ENCODE measurements at regions of chr2 and their contacts with region 1.

Region 1: DNA sequence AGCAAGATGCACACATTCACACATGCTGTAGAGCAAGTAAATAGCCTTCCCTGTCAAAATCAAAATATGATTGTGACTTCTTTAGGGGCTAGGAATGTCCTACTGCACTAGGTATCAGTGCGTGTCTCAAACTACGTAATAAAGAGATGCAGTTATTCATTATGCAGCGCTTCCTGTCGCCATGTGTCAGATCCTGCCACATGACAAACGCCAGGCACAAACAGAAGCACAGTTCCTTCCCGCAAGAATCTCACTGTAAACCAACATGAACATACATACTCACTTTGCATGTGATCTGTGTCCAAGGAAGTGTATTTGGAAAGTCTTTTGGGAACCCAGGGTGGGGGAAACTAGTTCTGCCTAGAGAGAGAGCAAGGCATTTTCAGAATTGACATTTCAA is 599.9 kb downstream of the RNF144A start:
- DNase-seq: peak in 7 of 9 donors; percentile 28 to 63 (median 49)
- ATAC-seq: peak; percentile 89
- H3K4me3 ChIP-seq: peak overlapping the region; percentile 12
- H3K4me3 Mint-ChIP-seq: peak overlapping the region; percentile 20 to 82 (median 77)
- H3K27ac ChIP-seq: peak overlapping the region; percentile 35
- H3K27ac Mint-ChIP-seq: peak overlapping the region; percentile 71 to 97 (median 88)
- H3K4me1 ChIP-seq: peaks cover 0 to 16% of the 10 kb centered on the region in 2 donors
- H3K4me1 Mint-ChIP-seq: peaks cover 13 to 68% (median 51%) of the 10 kb centered on the region in 7 donors
- H3K27me3 ChIP-seq: no peaks in the 10 kb centered on the region
- H3K27me3 Mint-ChIP-seq: no peaks in the 10 kb centered on the region

Region 2: DNA sequence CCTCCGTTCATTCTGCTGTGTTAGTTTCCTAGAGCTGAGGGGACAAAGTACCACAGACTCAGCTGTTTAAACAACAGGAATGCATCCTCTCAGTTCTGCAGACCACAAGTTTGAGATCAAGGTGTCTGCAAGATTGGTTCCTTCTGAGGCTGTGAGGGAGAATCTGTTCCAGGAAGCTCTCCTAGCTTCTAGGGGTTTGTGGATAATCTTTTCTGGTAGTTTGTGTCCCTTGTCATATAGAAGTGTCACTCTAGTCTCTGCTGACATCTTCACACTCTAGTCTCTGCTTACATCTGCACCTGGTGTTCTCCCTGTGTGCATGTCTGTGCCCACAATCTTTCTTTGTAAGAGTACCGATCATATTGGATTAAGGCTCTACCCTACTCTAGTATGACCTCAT is 18.1 kb before region 1 on chr2:
- CTCF ChIA-PET with region 1: no interaction called
- POLR2A ChIA-PET with region 1: no interaction called
- intact Hi-C with region 1: loop called in 1 of 2 experiments (anchors 2 kb)
- DNase-seq: peak in 1 of 9 donors; percentile 14
- ATAC-seq: no peak
- H3K4me3 ChIP-seq: no peak overlapping the region
- H3K4me3 Mint-ChIP-seq: peak overlapping the region in 4 of 10 donors; percentile 5 to 37 (median 18)
- H3K27ac ChIP-seq: no peak overlapping the region
- H3K27ac Mint-ChIP-seq: peak overlapping the region in 3 of 9 donors; percentile 24 to 58 (median 51)
- H3K4me1 ChIP-seq: no peaks in the 10 kb centered on the region
- H3K4me1 Mint-ChIP-seq: peaks cover 10 to 52% (median 35%) of the 10 kb centered on the region in 7 donors
- H3K27me3 ChIP-seq: no peaks in the 10 kb centered on the region
- H3K27me3 Mint-ChIP-seq: no peaks in the 10 kb centered on the region

Region 3: GRCh38 chr2:7539760-7540159 is 22.7 kb after region 1 on chr2:
- CTCF ChIA-PET with region 1: no interaction called
- POLR2A ChIA-PET with region 1: interaction called, 5 read pairs
- intact Hi-C with region 1: loop called in 1 of 2 experiments (anchors 2 kb)
- DNase-seq: no peak
- ATAC-seq: no peak
- H3K4me3 ChIP-seq: no peak overlapping the region
- H3K4me3 Mint-ChIP-seq: peak overlapping the region in 4 of 10 donors; percentile 21 to 66 (median 34)
- H3K27ac ChIP-seq: no peak overlapping the region
- H3K27ac Mint-ChIP-seq: peak overlapping the region in 1 of 9 donors; percentile 86
- H3K4me1 ChIP-seq: peaks cover 0 to 7% of the 10 kb centered on the region in 2 donors
- H3K4me1 Mint-ChIP-seq: peaks cover 2 to 55% (median 42%) of the 10 kb centered on the region in 7 donors
- H3K27me3 ChIP-seq: no peaks in the 10 kb centered on the region
- H3K27me3 Mint-ChIP-seq: no peaks in the 10 kb centered on the region

Region 4: DNA sequence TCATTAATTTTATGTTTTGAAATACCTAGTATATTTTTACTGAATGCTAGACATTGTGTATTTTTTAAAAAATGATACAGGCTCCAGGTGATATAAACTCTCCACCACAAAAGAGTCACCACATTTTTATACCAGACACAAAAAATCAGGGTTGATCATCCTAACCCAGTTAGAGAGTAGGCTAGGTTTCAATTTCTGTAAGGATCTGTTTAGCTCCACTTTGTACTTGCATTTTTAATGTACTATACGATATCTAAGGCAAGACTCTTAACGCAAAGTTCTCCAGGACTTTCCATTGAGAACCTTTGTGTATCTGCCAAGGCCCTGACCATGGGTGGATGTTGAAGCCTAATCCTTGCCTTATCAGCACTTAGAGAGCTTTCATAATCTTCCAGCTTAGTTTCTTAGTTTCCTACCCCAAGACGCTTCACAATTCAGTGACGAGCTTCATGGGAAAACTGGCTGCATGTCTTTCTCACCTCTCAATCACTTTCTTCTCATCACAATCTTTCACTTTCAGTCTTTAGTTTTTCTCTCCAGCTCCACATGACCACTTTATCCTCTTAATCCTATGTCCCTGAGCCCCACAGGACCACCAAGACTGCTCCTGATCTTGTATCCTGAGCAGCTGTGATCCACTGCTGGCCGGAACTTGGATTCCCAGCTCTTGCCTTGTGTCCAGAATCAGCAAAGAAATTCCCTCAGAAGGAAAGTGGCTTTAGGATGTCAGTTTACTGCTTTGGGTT is 35.9 kb after region 1 on chr2:
- CTCF ChIA-PET with region 1: no interaction called
- POLR2A ChIA-PET with region 1: no interaction called
- intact Hi-C with region 1: no loop called
- DNase-seq: no peak
- ATAC-seq: no peak
- H3K4me3 ChIP-seq: peak overlapping the region; percentile 22
- H3K4me3 Mint-ChIP-seq: peak overlapping the region; percentile 5 to 87 (median 61)
- H3K27ac ChIP-seq: no peak overlapping the region
- H3K27ac Mint-ChIP-seq: peak overlapping the region; percentile 5 to 82 (median 46)
- H3K4me1 ChIP-seq: peaks cover 0 to 6% of the 10 kb centered on the region in 2 donors
- H3K4me1 Mint-ChIP-seq: peaks cover 9 to 30% (median 22%) of the 10 kb centered on the region in 7 donors
- H3K27me3 ChIP-seq: no peaks in the 10 kb centered on the region
- H3K27me3 Mint-ChIP-seq: no peaks in the 10 kb centered on the region

Measured in naive thymus-derived CD4-positive, alpha-beta T cell (primary cell).